ENCODE measurements at regions of chr12 and their contacts with region 1.

Region 1: DNA sequence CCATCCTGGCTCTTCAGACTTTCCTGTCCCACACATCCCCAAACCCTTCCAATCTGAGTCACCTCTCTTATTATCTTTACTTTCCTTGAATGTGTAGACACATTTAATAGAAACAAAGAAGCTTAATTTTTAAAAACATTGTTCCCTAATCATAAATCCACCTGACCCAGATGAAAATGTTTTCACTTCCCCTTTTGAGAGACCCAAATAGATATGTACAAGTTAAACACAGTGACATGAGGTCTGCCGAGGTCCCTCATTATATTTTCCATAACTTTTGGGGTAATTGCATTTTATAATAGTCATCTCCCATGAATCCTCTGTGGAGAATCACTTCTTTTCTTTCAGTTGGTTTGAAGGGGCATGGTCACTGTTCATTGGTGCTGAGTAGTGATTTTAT is 191.1 kb downstream of the GRIN2B start:
- DNase-seq: no peak
- H3K4me3 ChIP-seq: no peak overlapping the region
- H3K27ac ChIP-seq: no peak overlapping the region
- H3K4me1 ChIP-seq: no peaks in the 10 kb centered on the region
- H3K27me3 ChIP-seq: no peaks in the 10 kb centered on the region
- CTCF ChIP-seq: no peak
- EP300 ChIP-seq: no peak
- POLR2A ChIP-seq: no peak

Region 2: DNA sequence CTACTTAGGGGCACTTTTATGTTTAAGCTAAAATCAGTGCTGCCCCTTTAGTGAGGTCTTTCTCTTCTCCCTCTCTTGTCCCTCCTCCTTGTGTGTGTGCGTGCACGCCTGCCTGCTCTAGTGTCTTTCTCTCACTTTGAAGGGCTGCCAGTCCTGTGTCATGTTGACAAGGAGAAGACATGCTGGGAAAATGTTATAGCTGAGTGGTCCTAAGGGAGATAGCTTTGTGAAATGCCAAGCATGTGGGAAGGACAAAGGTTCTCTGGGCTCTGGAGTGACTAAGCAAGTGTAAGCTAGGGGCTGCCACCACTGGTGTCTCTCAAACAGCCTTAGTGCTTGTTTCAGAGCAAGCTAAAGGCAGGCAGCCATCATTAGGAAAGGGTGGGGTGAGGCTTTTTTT is 485.4 kb before region 1 on chr12:
- intact Hi-C with region 1: no loop called
- DNase-seq: no peak
- H3K4me3 ChIP-seq: no peak overlapping the region
- H3K27ac ChIP-seq: no peak overlapping the region
- H3K4me1 ChIP-seq: no peaks in the 10 kb centered on the region
- H3K27me3 ChIP-seq: no peaks in the 10 kb centered on the region
- CTCF ChIP-seq: no peak
- EP300 ChIP-seq: no peak
- POLR2A ChIP-seq: no peak

Region 3: DNA sequence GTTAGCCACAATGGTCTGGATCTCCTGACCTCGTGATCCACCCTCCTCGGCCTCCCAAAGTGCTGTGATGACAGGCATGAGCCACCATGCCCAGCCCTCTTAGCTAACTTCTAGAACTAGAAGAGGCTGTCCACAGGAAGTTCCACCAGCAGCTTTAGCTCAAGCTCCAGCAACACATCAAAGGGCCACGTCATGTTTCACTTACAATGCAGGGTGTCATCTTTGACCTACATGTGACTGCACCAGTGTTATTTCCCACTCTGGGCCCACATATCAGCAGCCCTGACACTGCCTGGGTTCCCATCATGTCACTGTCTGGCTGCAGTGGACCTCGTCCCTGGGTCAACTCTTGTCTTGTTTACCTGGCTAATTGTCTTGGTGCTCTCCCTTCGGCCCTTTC is 43.9 kb after region 1 on chr12:
- intact Hi-C with region 1: no loop called
- DNase-seq: no peak
- H3K4me3 ChIP-seq: no peak overlapping the region
- H3K27ac ChIP-seq: no peak overlapping the region
- H3K4me1 ChIP-seq: no peaks in the 10 kb centered on the region
- H3K27me3 ChIP-seq: no peaks in the 10 kb centered on the region
- CTCF ChIP-seq: no peak
- EP300 ChIP-seq: no peak
- POLR2A ChIP-seq: no peak

Region 4: DNA sequence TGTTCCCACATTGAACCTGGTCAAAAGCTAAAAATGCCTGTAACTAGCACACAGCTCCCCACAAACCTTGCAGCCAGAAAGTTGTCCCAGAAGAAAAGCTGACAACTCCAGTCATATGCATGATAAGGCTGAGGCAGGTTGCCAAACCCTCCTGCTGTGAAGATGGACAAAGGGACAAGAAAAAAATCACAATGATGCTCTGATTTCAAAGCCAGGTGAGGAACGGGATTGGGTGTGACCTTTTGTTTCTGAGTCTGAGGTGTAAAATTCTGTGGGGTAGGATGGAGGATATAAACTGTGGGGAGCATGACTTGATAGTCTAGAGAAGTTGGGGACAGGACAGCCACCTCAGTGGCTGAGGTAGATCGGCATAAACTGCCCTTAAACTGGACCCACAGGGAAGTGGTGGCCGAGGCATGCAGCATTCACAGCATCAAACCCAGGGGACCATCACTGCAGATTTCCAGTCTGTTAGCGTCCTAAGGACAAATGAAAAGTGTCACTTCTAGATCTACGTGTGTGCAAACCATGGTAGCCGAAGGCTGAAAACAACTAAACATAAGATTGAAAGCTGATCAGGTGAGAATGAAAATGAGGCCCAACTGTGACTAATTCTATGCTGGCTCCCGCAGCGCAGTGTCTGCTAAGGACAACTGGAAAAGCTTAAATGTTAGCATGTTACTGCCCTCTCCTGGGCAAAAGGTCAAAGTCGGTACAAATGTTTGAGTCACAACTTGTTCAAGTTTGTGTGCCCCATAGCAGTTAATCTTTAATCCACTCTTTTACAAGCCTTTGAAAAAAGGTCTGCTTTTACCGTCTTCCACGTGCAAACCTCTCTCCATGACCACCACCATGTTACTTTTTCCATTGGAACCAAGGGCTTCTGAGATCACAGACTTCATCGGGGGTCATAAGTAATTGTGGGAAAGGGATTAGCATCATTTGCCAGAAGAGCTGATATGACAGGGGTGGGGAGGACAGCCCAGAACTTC is 151.2 kb after region 1 on chr12:
- intact Hi-C with region 1: no loop called
- DNase-seq: no peak
- H3K4me3 ChIP-seq: no peak overlapping the region
- H3K27ac ChIP-seq: no peak overlapping the region
- H3K4me1 ChIP-seq: no peaks in the 10 kb centered on the region
- H3K27me3 ChIP-seq: no peaks in the 10 kb centered on the region
- CTCF ChIP-seq: no peak
- EP300 ChIP-seq: no peak
- POLR2A ChIP-seq: no peak

Region 5: GRCh38 chr12:14076538-14076937 is 286.2 kb after region 1 on chr12:
- intact Hi-C with region 1: no loop called
- DNase-seq: no peak
- H3K4me3 ChIP-seq: no peak overlapping the region
- H3K27ac ChIP-seq: no peak overlapping the region
- H3K4me1 ChIP-seq: no peaks in the 10 kb centered on the region
- H3K27me3 ChIP-seq: no peaks in the 10 kb centered on the region
- CTCF ChIP-seq: no peak
- EP300 ChIP-seq: no peak
- POLR2A ChIP-seq: no peak

Region 6: GRCh38 chr12:14956024-14956891 is 1165.9 kb after region 1 on chr12:
- intact Hi-C with region 1: loop called in 1 of 4 experiments (anchors 5 kb)
- DNase-seq: no peak
- H3K4me3 ChIP-seq: no peak overlapping the region
- H3K27ac ChIP-seq: no peak overlapping the region
- H3K4me1 ChIP-seq: peaks cover 6% of the 10 kb centered on the region
- H3K27me3 ChIP-seq: no peaks in the 10 kb centered on the region
- CTCF ChIP-seq: no peak
- EP300 ChIP-seq: no peak
- POLR2A ChIP-seq: no peak